Sciatic nerve (tissue), 2 donors: ENCODE measurements at regions of chr12 and their contacts with region 1.

Region 1: DNA sequence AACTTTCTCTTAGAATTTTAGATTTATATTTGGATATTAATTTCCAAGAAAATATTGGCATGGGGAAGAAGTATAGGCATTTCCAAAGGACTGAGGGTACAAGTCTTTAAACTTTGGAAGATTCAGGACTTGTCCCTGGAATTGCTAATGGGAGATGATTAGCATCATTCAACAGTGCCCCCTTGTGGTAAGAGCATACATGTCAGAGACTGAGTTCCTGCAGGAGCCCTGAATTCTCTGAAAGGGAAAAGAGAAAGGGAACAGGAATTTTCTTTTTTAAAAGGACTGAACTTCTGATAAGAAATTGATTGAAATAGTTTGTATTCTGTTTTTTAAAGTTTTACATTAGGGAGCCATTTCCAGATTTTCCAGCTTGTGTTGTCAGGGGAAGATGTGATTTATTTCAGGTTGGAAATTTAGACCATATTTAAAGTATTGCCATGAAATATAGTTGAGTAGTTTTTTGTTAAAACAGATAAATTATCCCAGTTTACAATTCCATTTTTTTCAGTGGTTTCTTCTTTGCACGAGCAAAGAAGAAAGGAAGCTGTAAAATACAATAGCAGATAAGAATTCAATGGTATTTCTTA is 44.0 kb upstream of the REP15 start:
- DNase-seq: no peak
- ATAC-seq: peak; percentile 85

Region 2: GRCh38 chr12:27434673-27435565 is 217.3 kb before region 1 on chr12:
- intact Hi-C with region 1: loop called (anchors 10 kb)
- DNase-seq: no peak
- ATAC-seq: no peak